CD4-positive, alpha-beta memory T cell (primary cell): ENCODE measurements at regions of chr15 and their contacts with region 1.

Region 1: DNA sequence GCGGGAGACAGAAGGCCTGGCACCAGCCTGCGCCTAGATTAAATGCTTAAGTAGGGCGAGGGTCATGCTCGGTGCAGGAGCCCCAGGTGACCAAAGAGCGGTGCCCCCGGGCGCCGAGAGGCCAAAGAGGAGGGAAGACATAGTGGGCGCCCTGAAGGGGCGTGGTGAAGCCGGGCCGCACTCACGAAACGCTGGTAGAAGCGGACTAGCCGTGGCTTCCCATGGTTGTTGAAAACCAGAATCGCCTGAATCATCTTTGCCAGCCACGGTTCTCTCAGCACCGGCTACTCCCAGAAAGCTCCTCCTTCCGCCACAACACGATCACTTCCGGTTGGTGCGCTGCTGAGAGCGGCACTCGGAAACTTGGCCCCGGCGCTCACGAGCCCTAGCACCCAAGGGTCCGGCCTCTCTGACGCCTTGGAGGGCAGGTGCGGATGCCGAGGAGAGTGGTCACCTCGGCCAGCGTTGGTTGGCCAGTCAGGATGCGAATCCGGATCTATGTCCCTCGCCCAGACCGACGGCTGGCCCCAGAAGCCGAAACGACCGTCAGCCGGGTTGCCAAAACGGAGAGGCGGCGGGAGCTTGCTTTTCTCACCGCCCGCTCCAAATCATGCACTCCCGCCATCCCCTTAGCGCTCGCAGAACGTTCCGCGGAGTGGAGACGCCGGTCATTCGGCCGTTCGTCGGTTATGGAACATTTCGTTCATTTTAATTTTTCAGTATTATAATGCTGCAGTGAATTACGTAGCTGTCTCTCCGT is at the start of gene AP3S2:
- DNase-seq: peak; percentile 85 to 90 (median 86)
- H3K4me3 ChIP-seq: peak within 1 kb of the TSS; percentile 65 to 70
- H3K4me3 Mint-ChIP-seq: peak within 1 kb of the TSS; percentile 93 to 99 (median 98)
- H3K27ac ChIP-seq: peak within 1 kb of the TSS; percentile 84
- H3K27ac Mint-ChIP-seq: peak within 1 kb of the TSS; percentile 95 to 98 (median 97)
- H3K4me1 ChIP-seq: peaks cover 34% of the 10 kb centered on the region
- H3K4me1 Mint-ChIP-seq: peaks cover 20 to 46% (median 37%) of the 10 kb centered on the region in 4 donors
- H3K27me3 ChIP-seq: no peaks in the 10 kb centered on the region
- H3K27me3 Mint-ChIP-seq: no peaks in the 10 kb centered on the region
- total RNA-seq, gene AP3S2: 34.3 to 36.6 TPM

Region 2: DNA sequence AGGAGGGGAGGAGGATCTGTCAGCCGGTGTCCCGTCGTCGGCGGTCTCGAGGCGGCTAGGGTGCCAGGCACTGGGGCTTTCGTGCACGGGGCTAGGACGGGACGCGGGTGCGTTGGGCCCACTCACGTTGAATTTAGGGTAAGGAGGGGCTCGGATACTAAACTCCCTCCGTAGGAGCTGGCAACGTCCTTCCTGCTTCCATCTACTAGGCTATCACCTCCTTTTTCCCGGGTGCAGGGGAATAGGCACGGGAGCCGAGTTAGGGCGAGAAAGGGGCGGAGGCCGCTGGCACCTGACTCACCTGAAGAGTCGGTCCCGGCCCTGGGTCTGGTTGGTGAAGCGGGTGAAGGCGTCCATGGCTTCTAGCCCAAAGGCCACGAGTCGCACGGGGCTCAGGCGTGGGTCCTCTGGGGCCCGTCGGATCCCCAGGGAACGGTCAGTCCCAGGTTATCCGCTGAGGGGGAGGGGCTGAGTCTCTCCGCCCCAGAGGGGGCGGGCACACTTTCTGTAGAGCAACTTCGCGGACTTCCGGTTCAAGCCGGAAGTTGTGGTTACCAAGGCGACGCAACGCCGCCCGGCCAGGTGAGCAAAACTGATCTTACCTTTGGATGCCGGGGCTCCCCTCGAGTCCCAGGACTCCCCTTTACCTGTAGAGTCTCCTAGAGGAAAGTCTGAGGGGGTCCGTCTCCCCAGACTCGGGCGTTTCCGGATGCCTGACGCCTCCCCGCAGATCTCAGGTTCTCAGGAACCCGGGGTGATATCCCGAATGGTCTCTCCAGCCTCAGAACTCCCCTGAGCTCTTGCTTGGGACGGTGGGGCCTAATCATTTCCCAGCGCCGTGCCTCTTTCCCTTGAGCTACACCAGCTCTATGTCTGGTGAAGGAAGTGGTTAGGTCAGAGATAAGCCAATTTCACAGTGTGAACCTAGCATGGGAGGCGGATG is 203.3 kb before region 1 on chr15 and contains the starts of genes PEX11A and WDR93:
- CTCF ChIA-PET with region 1: no interaction called
- POLR2A ChIA-PET with region 1: interaction called, 3 read pairs
- intact Hi-C with region 1: loop called (anchors 1 kb)
- DNase-seq: peak; percentile 71 to 76 (median 73)
- H3K4me3 ChIP-seq: peak within 1 kb of the TSS; percentile 76 to 98
- H3K4me3 Mint-ChIP-seq: peak within 1 kb of the TSS; percentile 87 to 94 (median 90)
- H3K27ac ChIP-seq: peak within 1 kb of the TSS; percentile 40
- H3K27ac Mint-ChIP-seq: peak within 1 kb of the TSS; percentile 76 to 96 (median 93)
- H3K4me1 ChIP-seq: peaks cover 8% of the 10 kb centered on the region
- H3K4me1 Mint-ChIP-seq: peaks cover 5 to 21% (median 14%) of the 10 kb centered on the region in 4 donors
- H3K27me3 ChIP-seq: no peaks in the 10 kb centered on the region
- H3K27me3 Mint-ChIP-seq: no peaks in the 10 kb centered on the region
- total RNA-seq, gene PEX11A: 2.9 to 3.0 TPM
- total RNA-seq, gene WDR93: not detected

Region 3: GRCh38 chr15:89967881-89968280 is 74.0 kb after region 1 on chr15:
- CTCF ChIA-PET with region 1: no interaction called
- POLR2A ChIA-PET with region 1: no interaction called
- intact Hi-C with region 1: no loop called
- DNase-seq: no peak
- H3K4me3 ChIP-seq: no peak overlapping the region
- H3K4me3 Mint-ChIP-seq: no peak overlapping the region
- H3K27ac ChIP-seq: no peak overlapping the region
- H3K27ac Mint-ChIP-seq: peak overlapping the region in 1 of 7 donors; percentile 37
- H3K4me1 ChIP-seq: no peaks in the 10 kb centered on the region
- H3K4me1 Mint-ChIP-seq: peaks cover 0 to 4% (median 1%) of the 10 kb centered on the region in 4 donors
- H3K27me3 ChIP-seq: no peaks in the 10 kb centered on the region
- H3K27me3 Mint-ChIP-seq: no peaks in the 10 kb centered on the region

Region 4: DNA sequence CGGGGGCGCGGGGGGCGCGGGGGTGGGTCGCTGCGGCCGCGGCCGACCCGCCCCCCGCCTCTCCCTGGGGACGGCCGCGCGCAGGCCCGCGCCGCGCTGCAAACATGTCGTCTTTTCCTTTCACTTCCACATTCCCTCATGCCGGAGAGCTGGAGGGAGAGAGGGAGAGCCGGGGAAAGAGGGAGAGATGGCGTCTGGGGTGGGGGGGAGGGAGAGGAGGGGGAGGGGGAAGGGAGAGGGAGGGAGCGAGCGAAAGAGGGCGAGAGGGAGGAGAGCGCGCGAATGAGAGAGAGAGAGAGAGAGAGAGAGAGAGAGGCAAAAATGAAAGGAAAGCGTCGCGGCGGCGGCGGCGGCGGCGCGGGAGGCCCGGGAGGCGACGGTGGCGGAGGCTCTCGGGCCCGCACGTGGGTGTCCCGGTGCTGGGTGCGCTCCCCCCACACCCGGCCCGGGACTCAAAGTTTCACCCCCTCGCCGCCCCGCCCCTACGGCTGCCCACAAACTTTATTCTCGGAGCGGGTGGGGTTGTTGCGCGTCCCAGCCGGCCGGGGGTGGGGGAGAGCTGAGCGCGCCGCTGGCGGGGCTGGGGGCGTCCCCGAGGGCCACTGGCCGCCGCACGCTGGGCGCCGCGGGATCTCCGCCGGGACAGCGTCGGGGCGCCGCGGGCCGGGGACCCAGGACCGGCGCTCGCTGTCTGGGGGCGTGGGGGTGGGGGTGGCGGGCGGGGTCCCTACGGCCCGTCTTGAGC is 108.0 kb after region 1 on chr15:
- CTCF ChIA-PET with region 1: no interaction called
- POLR2A ChIA-PET with region 1: interaction called, 10 read pairs
- intact Hi-C with region 1: no loop called
- DNase-seq: peak; percentile 71 to 76 (median 76)
- H3K4me3 ChIP-seq: peak overlapping the region in 1 of 2 donors; percentile 47
- H3K4me3 Mint-ChIP-seq: peak overlapping the region; percentile 82 to 96 (median 89)
- H3K27ac ChIP-seq: peak overlapping the region; percentile 61
- H3K27ac Mint-ChIP-seq: peak overlapping the region; percentile 86 to 98 (median 94)
- H3K4me1 ChIP-seq: peaks cover 66% of the 10 kb centered on the region
- H3K4me1 Mint-ChIP-seq: peaks cover 30 to 70% (median 53%) of the 10 kb centered on the region in 4 donors
- H3K27me3 ChIP-seq: no peaks in the 10 kb centered on the region
- H3K27me3 Mint-ChIP-seq: no peaks in the 10 kb centered on the region

Region 5: DNA sequence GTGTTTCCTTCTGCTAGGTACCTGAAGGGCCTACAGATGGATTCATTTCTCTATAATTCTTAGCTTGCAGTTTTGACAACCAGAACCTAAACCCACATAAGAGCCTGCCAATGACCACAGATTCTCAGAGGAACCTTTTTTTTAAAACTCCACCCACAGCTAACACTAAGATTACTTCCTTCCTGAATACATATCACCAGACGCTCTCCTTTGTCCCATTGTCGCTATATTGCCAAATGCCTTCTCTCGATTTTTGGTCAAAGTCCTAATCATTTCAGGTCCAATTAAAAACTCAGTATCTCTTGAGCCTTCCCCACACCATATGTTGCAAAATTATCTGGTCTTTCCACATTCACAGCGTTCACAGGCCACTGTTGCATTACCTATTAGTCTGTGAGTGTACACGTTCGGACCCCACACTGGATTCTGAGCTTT is 119.6 kb after region 1 on chr15:
- CTCF ChIA-PET with region 1: interaction called, 4 read pairs
- POLR2A ChIA-PET with region 1: interaction called, 12 read pairs
- intact Hi-C with region 1: loop called (anchors 5 kb)
- DNase-seq: peak; percentile 59 to 83 (median 77)
- H3K4me3 ChIP-seq: peak overlapping the region; percentile 12 to 27
- H3K4me3 Mint-ChIP-seq: peak overlapping the region; percentile 52 to 86 (median 80)
- H3K27ac ChIP-seq: no peak overlapping the region
- H3K27ac Mint-ChIP-seq: peak overlapping the region; percentile 7 to 90 (median 88)
- H3K4me1 ChIP-seq: peaks cover 72% of the 10 kb centered on the region
- H3K4me1 Mint-ChIP-seq: peaks cover 40 to 67% (median 51%) of the 10 kb centered on the region in 4 donors
- H3K27me3 ChIP-seq: no peaks in the 10 kb centered on the region
- H3K27me3 Mint-ChIP-seq: no peaks in the 10 kb centered on the region

Region 6: GRCh38 chr15:90086868-90087268 is 193.0 kb after region 1 on chr15:
- CTCF ChIA-PET with region 1: interaction called, 10 read pairs
- POLR2A ChIA-PET with region 1: interaction called, 3 read pairs
- intact Hi-C with region 1: loop called (anchors 1 kb)
- DNase-seq: peak in 2 of 5 donors; percentile 45 to 50
- H3K4me3 ChIP-seq: no peak overlapping the region
- H3K4me3 Mint-ChIP-seq: peak overlapping the region in 1 of 8 donors; percentile 2
- H3K27ac ChIP-seq: no peak overlapping the region
- H3K27ac Mint-ChIP-seq: peak overlapping the region; percentile 56 to 86 (median 72)
- H3K4me1 ChIP-seq: no peaks in the 10 kb centered on the region
- H3K4me1 Mint-ChIP-seq: peaks cover 6 to 24% (median 7%) of the 10 kb centered on the region in 4 donors
- H3K27me3 ChIP-seq: no peaks in the 10 kb centered on the region
- H3K27me3 Mint-ChIP-seq: no peaks in the 10 kb centered on the region

Region 7: GRCh38 chr15:90101969-90102890 is 208.4 kb after region 1 on chr15 and contains the start of gene IDH2:
- CTCF ChIA-PET with region 1: no interaction called
- POLR2A ChIA-PET with region 1: interaction called, 22 read pairs
- intact Hi-C with region 1: no loop called
- DNase-seq: peak; percentile 65 to 82 (median 75)
- H3K4me3 ChIP-seq: peak within 1 kb of the TSS; percentile 70 to 79
- H3K4me3 Mint-ChIP-seq: peak within 1 kb of the TSS; percentile 85 to 97 (median 90)
- H3K27ac ChIP-seq: peak within 1 kb of the TSS; percentile 65
- H3K27ac Mint-ChIP-seq: peak within 1 kb of the TSS; percentile 86 to 100 (median 98)
- H3K4me1 ChIP-seq: peaks cover 47% of the 10 kb centered on the region
- H3K4me1 Mint-ChIP-seq: peaks cover 35 to 55% (median 49%) of the 10 kb centered on the region in 4 donors
- H3K27me3 ChIP-seq: no peaks in the 10 kb centered on the region
- H3K27me3 Mint-ChIP-seq: no peaks in the 10 kb centered on the region
- total RNA-seq, gene IDH2: 41.2 to 43.6 TPM